ENCODE measurements at regions of chr3 and their contacts with region 1.

Region 1: DNA sequence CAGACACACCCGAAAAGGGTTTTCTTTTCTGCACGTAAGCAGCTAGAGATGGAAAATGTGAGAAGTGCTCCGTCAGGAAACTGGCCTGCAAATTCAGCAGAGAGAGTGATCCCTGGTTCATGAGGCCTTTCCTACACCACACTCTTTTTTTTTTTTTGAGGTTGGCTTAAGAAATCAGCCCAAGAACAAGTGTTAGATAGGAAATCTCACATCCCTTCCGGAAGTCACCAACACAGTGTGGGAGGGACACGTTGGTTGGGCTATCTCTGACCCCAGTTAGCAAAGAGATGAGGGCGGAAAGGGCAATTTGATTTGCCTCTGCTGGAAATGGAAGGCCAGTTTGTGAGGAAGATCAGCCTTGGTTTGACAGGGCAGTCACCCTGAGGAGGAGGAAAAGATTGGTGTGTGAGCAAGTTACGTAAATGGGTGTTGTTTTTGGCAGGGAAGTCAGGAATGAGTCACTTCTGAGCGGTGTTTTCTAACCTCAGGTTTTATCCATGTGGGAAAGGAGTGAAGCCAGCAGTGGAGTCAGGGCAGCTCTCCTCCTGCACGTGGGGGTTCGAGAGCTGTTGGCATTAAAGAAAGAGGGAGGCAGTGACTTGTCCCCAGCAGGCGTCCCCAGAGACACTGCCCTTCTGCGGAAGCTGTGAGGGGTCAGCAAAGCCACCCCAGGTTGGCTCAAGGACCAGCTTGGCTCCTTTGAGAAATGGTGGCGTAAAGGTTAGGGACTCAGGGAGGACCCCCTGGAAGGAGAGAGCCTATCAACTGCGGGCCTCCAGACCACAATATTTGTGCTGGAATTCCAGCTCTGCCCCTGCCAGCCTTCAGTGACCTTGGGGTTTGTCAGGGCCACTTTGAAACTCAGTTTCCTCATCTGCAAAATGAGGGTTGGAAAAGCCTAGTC is 237.6 kb upstream of the BHLHE40 start:
- DNase-seq: peak; percentile 99
- H3K4me3 ChIP-seq: peak overlapping the region in 1 of 3 experiments; percentile 10
- H3K27ac ChIP-seq: peak overlapping the region; percentile 99
- H3K4me1 ChIP-seq: peaks cover 28% of the 10 kb centered on the region
- H3K27me3 ChIP-seq: no peaks in the 10 kb centered on the region
- CTCF ChIP-seq: no peak
- POLR2A ChIP-seq: peak; percentile 41

Region 2: DNA sequence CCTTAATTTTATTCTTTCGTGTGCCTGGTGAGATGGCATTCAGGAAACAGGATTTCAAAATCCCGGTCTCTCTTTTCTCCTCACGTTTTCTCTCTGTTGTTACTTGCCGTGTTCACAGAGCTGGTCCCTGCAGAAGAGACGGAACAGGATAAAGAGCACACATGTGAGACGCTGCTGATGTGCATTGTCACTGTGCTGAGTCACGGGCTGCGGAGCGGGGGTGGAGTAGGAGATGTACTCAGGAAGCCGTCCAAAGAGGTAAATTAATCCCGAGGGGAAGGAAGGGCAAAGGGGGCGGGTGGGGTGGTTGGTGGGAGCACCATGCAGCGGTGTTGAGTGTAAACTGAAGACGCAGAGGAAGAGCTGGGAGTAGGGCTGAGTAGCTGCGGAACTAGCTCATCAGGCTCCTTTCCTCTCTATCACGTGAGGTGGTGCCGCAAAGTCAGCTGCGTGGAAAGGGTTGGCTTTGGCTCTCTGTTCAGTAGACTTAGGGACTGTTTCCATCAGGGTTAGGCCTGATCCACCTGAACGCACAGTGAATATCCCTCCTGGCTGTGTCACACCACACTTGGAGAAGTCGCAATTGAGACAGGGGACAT is 72.7 kb after region 1 on chr3:
- CTCF ChIA-PET with region 1: interaction called, 3 read pairs
- POLR2A ChIA-PET with region 1: no interaction called
- dilution Hi-C with region 1: no loop called
- intact Hi-C with region 1: loop called (anchors 1 kb)
- DNase-seq: peak; percentile 85
- H3K4me3 ChIP-seq: no peak overlapping the region
- H3K27ac ChIP-seq: peak overlapping the region; percentile 74
- H3K4me1 ChIP-seq: peaks cover 18% of the 10 kb centered on the region
- H3K27me3 ChIP-seq: no peaks in the 10 kb centered on the region
- CTCF ChIP-seq: no peak
- POLR2A ChIP-seq: no peak

Region 3: GRCh38 chr3:4831580-4831950 is 89.9 kb after region 1 on chr3:
- CTCF ChIA-PET with region 1: no interaction called
- POLR2A ChIA-PET with region 1: no interaction called
- dilution Hi-C with region 1: no loop called
- intact Hi-C with region 1: loop called (anchors 1 kb)
- DNase-seq: no peak
- H3K4me3 ChIP-seq: no peak overlapping the region
- H3K27ac ChIP-seq: peak overlapping the region; percentile 97
- H3K4me1 ChIP-seq: peaks cover 19% of the 10 kb centered on the region
- H3K27me3 ChIP-seq: no peaks in the 10 kb centered on the region
- CTCF ChIP-seq: no peak
- POLR2A ChIP-seq: peak; percentile 3

Region 4: GRCh38 chr3:4850928-4851265 is 109.2 kb after region 1 on chr3:
- CTCF ChIA-PET with region 1: no interaction called
- POLR2A ChIA-PET with region 1: no interaction called
- dilution Hi-C with region 1: no loop called
- intact Hi-C with region 1: loop called (anchors 1 kb)
- DNase-seq: no peak
- H3K4me3 ChIP-seq: no peak overlapping the region
- H3K27ac ChIP-seq: no peak overlapping the region
- H3K4me1 ChIP-seq: peaks cover 32% of the 10 kb centered on the region
- H3K27me3 ChIP-seq: no peaks in the 10 kb centered on the region
- CTCF ChIP-seq: no peak
- POLR2A ChIP-seq: no peak

Region 5: GRCh38 chr3:4986782-4987537 is 245.3 kb after region 1 on chr3:
- CTCF ChIA-PET with region 1: no interaction called
- POLR2A ChIA-PET with region 1: no interaction called
- dilution Hi-C with region 1: no loop called
- intact Hi-C with region 1: loop called (anchors 1 kb)
- DNase-seq: peak; percentile 97
- H3K4me3 ChIP-seq: peak overlapping the region in 2 of 3 experiments; percentile 1 to 25
- H3K27ac ChIP-seq: peak overlapping the region; percentile 100
- H3K4me1 ChIP-seq: peaks cover 56% of the 10 kb centered on the region
- H3K27me3 ChIP-seq: no peaks in the 10 kb centered on the region
- CTCF ChIP-seq: no peak
- POLR2A ChIP-seq: no peak

Measured in endothelial cell of umbilical vein (primary cell).